ENCODE measurements at regions of chr10 and their contacts with region 1.

Region 1: DNA sequence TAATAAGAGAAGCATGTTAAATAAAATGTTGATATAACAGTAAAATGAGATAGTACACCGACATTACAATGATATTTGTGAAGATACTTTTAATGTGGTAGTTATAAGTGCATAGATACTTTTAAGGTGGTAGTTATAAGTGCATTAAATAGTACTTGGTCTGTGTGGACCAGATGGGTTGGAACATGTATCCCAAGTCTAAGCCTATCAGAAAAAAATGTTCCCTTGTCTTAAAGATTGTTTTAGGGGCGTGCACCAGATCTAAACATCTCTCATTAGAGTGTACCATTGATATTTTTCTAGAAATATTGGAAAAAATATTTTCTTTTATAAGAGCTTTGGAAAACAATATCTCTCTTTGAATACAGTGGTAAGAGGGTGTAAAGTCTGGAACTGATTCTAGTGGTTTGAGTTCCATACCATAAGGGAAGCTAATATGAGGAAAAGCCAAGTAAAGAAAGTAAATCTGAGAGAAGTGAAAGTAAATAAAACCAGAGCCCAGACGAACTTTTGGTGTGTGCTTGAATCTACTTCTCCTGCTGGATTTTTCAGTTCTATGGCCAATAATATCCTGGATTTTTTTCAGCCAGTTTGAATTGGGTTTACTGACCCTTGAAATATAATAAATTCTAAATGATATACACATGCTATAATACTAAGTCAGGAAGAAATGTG is 175.3 kb downstream of the MBL2 start:
- DNase-seq: no peak
- ATAC-seq: no peak
- H3K4me3 Mint-ChIP-seq: no peak overlapping the region
- H3K27ac Mint-ChIP-seq: no peak overlapping the region
- H3K4me1 Mint-ChIP-seq: no peaks in the 10 kb centered on the region
- H3K27me3 Mint-ChIP-seq: no peaks in the 10 kb centered on the region
- CTCF ChIP-seq: no peak

Region 2: GRCh38 chr10:52313933-52314816 is 283.2 kb before region 1 on chr10 and contains the start of gene DKK1:
- CTCF ChIA-PET with region 1: no interaction called
- POLR2A ChIA-PET with region 1: no interaction called
- intact Hi-C with region 1: loop called (anchors 10 kb)
- DNase-seq: peak; percentile 46
- ATAC-seq: peak; percentile 47
- H3K4me3 Mint-ChIP-seq: no peak within 1 kb of the TSS
- H3K27ac Mint-ChIP-seq: no peak within 1 kb of the TSS
- H3K4me1 Mint-ChIP-seq: peaks cover 6% of the 10 kb centered on the region
- H3K27me3 Mint-ChIP-seq: peaks cover 39% of the 10 kb centered on the region
- CTCF ChIP-seq: no peak
- total RNA-seq, gene DKK1: not detected

Region 3: GRCh38 chr10:52621635-52622079 is 24.3 kb after region 1 on chr10:
- CTCF ChIA-PET with region 1: no interaction called
- POLR2A ChIA-PET with region 1: no interaction called
- intact Hi-C with region 1: no loop called
- DNase-seq: no peak
- ATAC-seq: no peak
- H3K4me3 Mint-ChIP-seq: no peak overlapping the region
- H3K27ac Mint-ChIP-seq: no peak overlapping the region
- H3K4me1 Mint-ChIP-seq: no peaks in the 10 kb centered on the region
- H3K27me3 Mint-ChIP-seq: no peaks in the 10 kb centered on the region
- CTCF ChIP-seq: no peak

Measured in activated CD8-positive, alpha-beta T cell treated with anti-CD3 and anti-CD28 coated beads for 36 hours (primary cell).